CD4-positive, alpha-beta memory T cell (primary cell): ENCODE measurements at regions of chr12 and their contacts with region 1.

Region 1: DNA sequence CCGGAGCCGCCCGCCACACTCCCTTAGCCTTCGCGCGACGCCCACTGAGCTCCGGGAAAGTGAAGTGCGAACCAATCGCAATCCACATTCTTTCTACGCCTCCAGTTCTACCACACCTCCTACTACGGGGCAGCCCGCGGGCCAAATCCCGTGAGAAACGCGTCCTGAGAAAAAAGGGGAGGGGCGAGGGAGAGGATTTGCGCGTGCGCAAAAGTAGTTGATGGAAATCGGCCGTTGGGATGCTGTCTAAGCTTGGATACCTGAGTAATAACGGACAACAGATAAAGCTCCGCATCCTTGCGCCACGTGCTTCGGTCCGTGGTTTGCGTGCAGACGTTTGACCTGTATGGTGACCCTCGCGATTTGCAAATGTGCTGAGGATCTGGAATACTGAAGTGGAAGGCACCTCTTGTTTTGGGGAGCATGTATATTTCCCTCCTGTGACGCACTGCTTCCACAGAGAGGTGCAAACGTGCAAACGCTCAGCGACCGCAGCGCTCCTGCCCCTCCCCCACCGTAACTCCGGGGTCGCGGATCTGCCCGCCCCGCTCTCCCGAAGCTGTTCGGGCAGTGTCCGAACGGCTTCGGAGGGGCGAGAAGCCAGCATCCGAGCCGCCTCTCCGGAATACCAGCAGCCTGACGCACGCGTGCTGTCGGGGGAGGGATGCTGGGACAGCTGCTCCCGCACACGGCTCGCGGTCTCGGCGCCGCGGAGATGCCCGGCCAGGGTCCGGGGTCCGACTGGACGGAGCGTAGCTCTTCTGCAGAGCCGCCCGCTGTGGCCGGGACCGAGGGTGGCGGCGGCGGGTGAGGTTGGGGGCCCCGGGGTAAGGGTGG is at the starts of genes FAM216A and GPN3:
- DNase-seq: peak; percentile 97 to 98 (median 98)
- H3K4me3 ChIP-seq: peak within 1 kb of the TSS; percentile 93 to 97
- H3K4me3 Mint-ChIP-seq: peak within 1 kb of the TSS; percentile 96 to 100 (median 98)
- H3K27ac ChIP-seq: peak within 1 kb of the TSS; percentile 75
- H3K27ac Mint-ChIP-seq: peak within 1 kb of the TSS; percentile 91 to 98 (median 96)
- H3K4me1 ChIP-seq: peaks cover 25% of the 10 kb centered on the region
- H3K4me1 Mint-ChIP-seq: peaks cover 17 to 45% (median 34%) of the 10 kb centered on the region in 4 donors
- H3K27me3 ChIP-seq: no peaks in the 10 kb centered on the region
- H3K27me3 Mint-ChIP-seq: no peaks in the 10 kb centered on the region
- total RNA-seq, gene FAM216A: 16.4 to 16.9 TPM
- total RNA-seq, gene GPN3: 12.5 to 16.6 TPM

Region 2: GRCh38 chr12:110513842-110514241 is 45.4 kb after region 1 on chr12:
- CTCF ChIA-PET with region 1: interaction called, 15 read pairs
- POLR2A ChIA-PET with region 1: interaction called, 4 read pairs
- intact Hi-C with region 1: loop called (anchors 2 kb)
- DNase-seq: no peak
- H3K4me3 ChIP-seq: no peak overlapping the region
- H3K4me3 Mint-ChIP-seq: no peak overlapping the region
- H3K27ac ChIP-seq: no peak overlapping the region
- H3K27ac Mint-ChIP-seq: no peak overlapping the region
- H3K4me1 ChIP-seq: no peaks in the 10 kb centered on the region
- H3K4me1 Mint-ChIP-seq: peaks cover 0 to 1% (median 0%) of the 10 kb centered on the region in 4 donors
- H3K27me3 ChIP-seq: no peaks in the 10 kb centered on the region
- H3K27me3 Mint-ChIP-seq: no peaks in the 10 kb centered on the region

Region 3: DNA sequence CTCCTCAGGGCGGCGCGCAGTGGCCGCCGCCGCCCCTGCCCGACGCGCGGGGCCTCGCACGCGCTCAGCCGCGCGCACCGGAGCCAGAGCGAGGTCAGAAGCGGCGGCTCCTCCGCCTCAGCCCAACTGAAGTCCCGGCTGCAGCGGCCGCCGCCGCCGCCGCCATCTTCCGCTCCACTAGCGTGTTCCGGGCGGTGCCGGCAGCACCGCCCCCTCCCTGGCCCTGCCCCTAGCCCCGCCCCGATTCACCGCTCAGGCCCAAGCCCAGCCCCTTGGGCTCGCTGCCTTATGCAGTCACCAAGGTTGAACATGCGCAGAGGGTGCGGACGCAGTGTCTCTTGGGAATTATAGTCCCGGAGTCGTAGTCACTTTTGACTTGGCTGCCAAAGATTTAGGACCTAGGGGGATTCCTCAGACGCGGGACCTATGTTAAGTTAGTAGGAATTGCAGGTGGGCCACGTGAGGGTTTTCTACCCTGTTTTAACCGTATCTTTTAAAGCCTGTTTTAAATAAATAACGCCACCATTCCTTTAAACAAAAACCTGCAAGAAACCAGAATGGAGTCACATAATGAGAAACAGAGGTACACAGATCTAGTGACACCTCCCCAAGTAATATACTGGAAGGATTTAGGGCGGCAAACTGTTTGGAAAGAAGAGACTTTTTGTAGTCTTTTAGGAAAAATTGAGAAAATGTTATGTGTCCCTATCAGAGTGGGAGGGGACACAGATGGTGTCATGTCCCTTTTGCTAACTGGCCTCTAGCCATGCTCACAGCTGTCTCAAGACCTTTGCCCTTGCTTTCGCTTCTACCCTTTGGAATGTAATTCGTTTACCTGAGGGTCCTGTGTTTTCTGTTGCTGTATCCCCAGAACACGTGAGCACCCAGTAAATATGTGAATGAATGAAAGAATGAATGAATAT is 115.0 kb after region 1 on chr12 and contains the start of gene PPTC7:
- CTCF ChIA-PET with region 1: interaction called, 4 read pairs
- POLR2A ChIA-PET with region 1: interaction called, 13 read pairs
- intact Hi-C with region 1: loop called (anchors 1 kb)
- DNase-seq: peak; percentile 91 to 97 (median 94)
- H3K4me3 ChIP-seq: peak within 1 kb of the TSS; percentile 77 to 84
- H3K4me3 Mint-ChIP-seq: peak within 1 kb of the TSS; percentile 89 to 98 (median 96)
- H3K27ac ChIP-seq: peak within 1 kb of the TSS; percentile 93
- H3K27ac Mint-ChIP-seq: peak within 1 kb of the TSS; percentile 94 to 97 (median 96)
- H3K4me1 ChIP-seq: peaks cover 62% of the 10 kb centered on the region
- H3K4me1 Mint-ChIP-seq: peaks cover 47 to 73% (median 61%) of the 10 kb centered on the region in 4 donors
- H3K27me3 ChIP-seq: no peaks in the 10 kb centered on the region
- H3K27me3 Mint-ChIP-seq: no peaks in the 10 kb centered on the region
- total RNA-seq, gene PPTC7: 32.6 to 35.6 TPM

Region 4: DNA sequence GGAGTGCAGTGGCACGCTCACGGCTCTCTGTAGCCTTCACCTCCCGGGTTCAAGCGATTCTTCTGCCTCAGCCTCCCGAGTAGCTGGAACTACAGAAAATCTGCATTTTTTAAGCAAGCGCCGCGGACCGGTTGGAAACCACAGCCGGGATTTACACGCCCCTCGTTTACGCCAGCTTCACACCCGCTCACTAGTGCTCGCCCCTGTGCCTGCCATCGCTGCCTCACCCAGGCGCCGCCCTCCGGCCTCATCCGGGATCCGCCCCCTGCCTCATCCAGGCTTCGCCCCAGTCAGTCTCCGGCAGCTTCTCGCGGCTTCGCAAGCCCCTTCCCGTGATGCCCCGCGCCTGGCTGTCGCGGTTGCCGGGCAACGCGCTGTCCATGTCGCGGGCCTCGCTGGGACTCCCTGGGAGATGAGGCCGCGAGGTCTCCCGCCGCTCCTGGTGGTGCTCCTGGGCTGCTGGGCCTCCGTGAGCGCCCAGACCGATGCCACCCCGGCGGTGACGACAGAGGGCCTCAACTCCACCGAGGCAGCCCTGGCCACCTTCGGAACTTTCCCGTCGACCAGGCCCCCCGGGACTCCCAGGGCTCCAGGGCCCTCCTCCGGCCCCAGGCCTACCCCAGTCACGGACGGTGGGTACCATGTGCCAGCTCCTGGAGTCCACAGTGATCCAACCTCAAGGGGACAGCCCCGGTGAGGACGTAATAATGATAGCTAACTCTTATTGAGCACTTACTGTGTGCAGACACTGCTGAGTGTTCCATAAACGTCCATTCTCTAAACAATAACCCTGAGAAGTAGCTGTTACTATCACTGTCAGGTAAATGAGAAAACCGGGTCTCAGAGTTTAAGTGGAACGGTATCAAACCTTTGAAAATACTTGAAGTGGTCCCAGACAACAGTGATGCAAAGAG is 145.6 kb after region 1 on chr12 and contains the start of gene TCTN1:
- CTCF ChIA-PET with region 1: interaction called, 9 read pairs
- POLR2A ChIA-PET with region 1: interaction called, 18 read pairs
- intact Hi-C with region 1: loop called (anchors 1 kb)
- DNase-seq: peak; percentile 93 to 96 (median 94)
- H3K4me3 ChIP-seq: peak within 1 kb of the TSS; percentile 53 to 86
- H3K4me3 Mint-ChIP-seq: peak within 1 kb of the TSS; percentile 86 to 90 (median 88)
- H3K27ac ChIP-seq: peak within 1 kb of the TSS; percentile 72
- H3K27ac Mint-ChIP-seq: peak within 1 kb of the TSS; percentile 65 to 94 (median 88)
- H3K4me1 ChIP-seq: peaks cover 8% of the 10 kb centered on the region
- H3K4me1 Mint-ChIP-seq: peaks cover 4 to 9% (median 6%) of the 10 kb centered on the region in 4 donors
- H3K27me3 ChIP-seq: no peaks in the 10 kb centered on the region
- H3K27me3 Mint-ChIP-seq: no peaks in the 10 kb centered on the region
- total RNA-seq, gene TCTN1: 5.8 to 7.7 TPM

Region 5: GRCh38 chr12:110670161-110670701 is 201.8 kb after region 1 on chr12:
- CTCF ChIA-PET with region 1: no interaction called
- POLR2A ChIA-PET with region 1: no interaction called
- intact Hi-C with region 1: no loop called
- DNase-seq: peak in 1 of 5 donors; percentile 43
- H3K4me3 ChIP-seq: no peak overlapping the region
- H3K4me3 Mint-ChIP-seq: peak overlapping the region in 7 of 8 donors; percentile 8 to 73 (median 45)
- H3K27ac ChIP-seq: no peak overlapping the region
- H3K27ac Mint-ChIP-seq: peak overlapping the region; percentile 58 to 90 (median 73)
- H3K4me1 ChIP-seq: peaks cover 20% of the 10 kb centered on the region
- H3K4me1 Mint-ChIP-seq: peaks cover 16 to 28% (median 23%) of the 10 kb centered on the region in 4 donors
- H3K27me3 ChIP-seq: no peaks in the 10 kb centered on the region
- H3K27me3 Mint-ChIP-seq: no peaks in the 10 kb centered on the region